Transverse colon (tissue), 4 donors: ENCODE measurements at regions of chr22 and their contacts with region 1.

Region 1: GRCh38 chr22:42425337-42425988 is 6.7 kb downstream of the NFAM1 start:
- DNase-seq: no peak
- H3K4me3 ChIP-seq: no peak overlapping the region
- H3K27ac ChIP-seq: no peak overlapping the region
- H3K4me1 ChIP-seq: no peaks in the 10 kb centered on the region
- H3K27me3 ChIP-seq: peaks cover 3% of the 10 kb centered on the region
- CTCF ChIP-seq: no peak
- EP300 ChIP-seq: no peak
- POLR2A ChIP-seq: no peak

Region 2: DNA sequence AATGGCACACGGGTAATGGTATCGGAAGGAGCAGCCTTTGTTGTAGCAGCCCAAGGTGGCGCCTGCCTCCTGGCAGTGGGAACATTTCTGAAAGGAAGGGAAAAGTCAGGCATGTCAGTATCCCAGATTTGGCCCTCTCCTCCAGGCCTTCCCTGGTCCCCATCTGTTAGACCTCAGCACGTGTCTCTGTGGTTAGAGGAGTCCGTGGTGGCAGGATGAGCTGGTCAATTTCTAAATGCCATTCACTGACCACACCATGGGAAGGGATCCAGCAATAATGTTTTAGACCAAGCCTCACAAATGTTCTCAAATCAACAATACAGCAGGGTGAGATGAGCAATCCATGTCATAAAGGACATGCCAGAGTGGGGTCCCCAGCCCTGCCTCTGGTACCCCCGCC is 245.8 kb before region 1 on chr22:
- in situ Hi-C with region 1: loop called in 2 of 4 experiments (anchors 10 kb)
- intact Hi-C with region 1: no loop called
- DNase-seq: no peak
- H3K4me3 ChIP-seq: no peak overlapping the region
- H3K27ac ChIP-seq: peak overlapping the region in 2 of 4 donors; percentile 7 to 44
- H3K4me1 ChIP-seq: peaks cover 0 to 45% (median 31%) of the 10 kb centered on the region in 4 donors
- H3K27me3 ChIP-seq: no peaks in the 10 kb centered on the region
- CTCF ChIP-seq: no peak
- EP300 ChIP-seq: no peak
- POLR2A ChIP-seq: no peak